ENCODE measurements at regions of chr13 and their contacts with region 1.

Region 1: GRCh38 chr13:52968074-52968700 is 60.4 kb upstream of the OLFM4 start:
- DNase-seq: peak; percentile 71
- H3K4me3 ChIP-seq: no peak overlapping the region; a peak in 1 of 4 replicates
- H3K27ac ChIP-seq: no peak overlapping the region
- H3K4me1 ChIP-seq: no peaks in the 10 kb centered on the region
- H3K27me3 ChIP-seq: no peaks in the 10 kb centered on the region
- CTCF ChIP-seq: peak; percentile 96
- EP300 ChIP-seq: no peak
- RAD21 ChIP-seq: peak; percentile 83

Region 2: DNA sequence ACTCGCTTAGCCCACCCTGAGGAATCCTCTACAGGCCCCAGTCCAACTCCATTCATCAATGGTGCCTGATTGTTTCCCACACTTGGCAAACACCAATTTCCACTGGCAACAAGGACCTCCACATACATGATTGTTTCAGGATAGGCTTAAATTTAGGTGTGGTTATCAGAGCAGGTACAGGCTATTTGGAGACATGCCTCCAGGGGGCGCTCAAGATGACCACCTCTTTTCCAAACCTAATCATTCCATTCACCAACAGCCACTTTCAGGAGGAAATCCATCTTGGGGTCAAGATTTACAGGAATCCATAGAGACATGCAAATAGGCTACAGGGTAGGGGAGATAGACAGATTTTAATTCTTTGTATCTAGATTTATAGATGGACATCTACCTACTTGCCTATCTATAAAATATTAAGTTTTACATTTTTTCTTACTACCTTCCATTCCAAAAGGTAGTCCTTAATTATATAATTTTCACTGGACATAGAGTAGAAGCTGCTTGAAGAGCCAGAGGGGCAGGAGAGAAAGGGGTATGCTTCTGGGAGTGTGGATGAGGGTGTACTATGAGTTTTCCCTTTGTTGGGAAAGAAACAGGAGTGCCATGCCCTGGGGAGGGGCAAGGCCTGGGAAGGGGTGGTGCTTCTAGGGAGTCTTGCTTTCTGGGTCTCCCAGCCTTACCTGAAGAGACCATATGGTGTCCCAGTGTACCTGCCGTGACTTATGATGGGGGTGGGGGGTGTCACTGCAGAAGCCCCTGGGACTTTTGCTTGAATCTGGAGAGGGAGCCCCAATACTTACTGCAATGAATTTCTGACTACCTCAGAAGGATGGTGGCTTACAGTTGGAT is 105.6 kb before region 1 on chr13:
- CTCF ChIA-PET with region 1: interaction called, 44 read pairs
- POLR2A ChIA-PET with region 1: no interaction called
- DNase-seq: peak; percentile 59
- H3K4me3 ChIP-seq: no peak overlapping the region; a peak in 1 of 4 replicates
- H3K27ac ChIP-seq: no peak overlapping the region
- H3K4me1 ChIP-seq: no peaks in the 10 kb centered on the region
- H3K27me3 ChIP-seq: no peaks in the 10 kb centered on the region; the same call in 1 of the 2 replicates
- CTCF ChIP-seq: peak; percentile 79
- EP300 ChIP-seq: no peak
- RAD21 ChIP-seq: peak; percentile 48

Region 3: GRCh38 chr13:52903320-52903719 is 64.9 kb before region 1 on chr13:
- CTCF ChIA-PET with region 1: interaction called, 11 read pairs
- POLR2A ChIA-PET with region 1: no interaction called
- DNase-seq: no peak
- H3K4me3 ChIP-seq: no peak overlapping the region
- H3K27ac ChIP-seq: no peak overlapping the region
- H3K4me1 ChIP-seq: no peaks in the 10 kb centered on the region
- H3K27me3 ChIP-seq: peaks cover 9% of the 10 kb centered on the region; the same call in 1 of the 2 replicates
- CTCF ChIP-seq: no peak
- EP300 ChIP-seq: no peak
- RAD21 ChIP-seq: no peak

Region 4: GRCh38 chr13:52994865-52995264 is 26.7 kb after region 1 on chr13:
- CTCF ChIA-PET with region 1: interaction called, 18 read pairs
- POLR2A ChIA-PET with region 1: no interaction called
- DNase-seq: no peak
- H3K4me3 ChIP-seq: no peak overlapping the region
- H3K27ac ChIP-seq: no peak overlapping the region
- H3K4me1 ChIP-seq: peaks cover 0 to 12% of the 10 kb centered on the region in 2 experiments; a peak in 2 of 4 replicates
- H3K27me3 ChIP-seq: no peaks in the 10 kb centered on the region
- CTCF ChIP-seq: no peak
- EP300 ChIP-seq: no peak
- RAD21 ChIP-seq: no peak

Region 5: DNA sequence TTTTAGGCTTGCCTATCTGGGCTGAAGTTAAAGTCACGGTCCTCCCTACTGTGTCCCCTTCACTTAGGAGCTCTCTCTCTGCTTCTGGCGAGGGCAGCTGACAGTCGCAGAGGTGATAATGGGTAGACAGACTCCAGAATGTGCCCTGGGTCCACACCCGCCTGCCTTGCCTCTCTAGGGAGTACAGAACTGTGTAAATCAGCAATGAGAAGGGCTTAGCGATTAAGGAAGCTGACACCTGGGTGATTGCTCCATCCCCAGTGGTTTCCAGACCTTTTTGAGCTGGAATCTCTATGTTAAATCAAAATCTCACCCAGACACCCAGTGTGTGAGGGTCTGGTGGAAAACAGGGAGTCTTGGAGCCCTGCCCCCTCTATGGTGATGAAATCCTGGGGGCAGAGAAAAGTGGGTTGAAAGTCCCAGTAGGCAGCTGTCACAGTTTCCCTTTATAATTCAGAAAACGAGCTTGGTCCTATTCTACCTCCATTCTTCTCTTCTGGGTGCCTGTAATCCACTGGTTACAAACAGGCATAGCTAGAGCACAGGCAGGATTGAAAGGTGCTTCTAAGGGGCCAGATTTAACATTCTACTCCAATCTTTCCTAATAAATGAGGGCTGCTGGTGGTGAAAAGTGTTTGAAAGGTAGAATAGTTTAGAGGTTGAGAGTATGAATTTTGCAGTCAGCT is 107.3 kb after region 1 on chr13:
- CTCF ChIA-PET with region 1: interaction called, 21 read pairs
- POLR2A ChIA-PET with region 1: no interaction called
- DNase-seq: no peak
- H3K4me3 ChIP-seq: no peak overlapping the region
- H3K27ac ChIP-seq: no peak overlapping the region; a peak in 1 of 4 replicates
- H3K4me1 ChIP-seq: peaks cover 0 to 20% of the 10 kb centered on the region in 2 experiments; a peak in 2 of 4 replicates
- H3K27me3 ChIP-seq: no peaks in the 10 kb centered on the region
- CTCF ChIP-seq: no peak
- EP300 ChIP-seq: no peak
- RAD21 ChIP-seq: no peak

Region 6: DNA sequence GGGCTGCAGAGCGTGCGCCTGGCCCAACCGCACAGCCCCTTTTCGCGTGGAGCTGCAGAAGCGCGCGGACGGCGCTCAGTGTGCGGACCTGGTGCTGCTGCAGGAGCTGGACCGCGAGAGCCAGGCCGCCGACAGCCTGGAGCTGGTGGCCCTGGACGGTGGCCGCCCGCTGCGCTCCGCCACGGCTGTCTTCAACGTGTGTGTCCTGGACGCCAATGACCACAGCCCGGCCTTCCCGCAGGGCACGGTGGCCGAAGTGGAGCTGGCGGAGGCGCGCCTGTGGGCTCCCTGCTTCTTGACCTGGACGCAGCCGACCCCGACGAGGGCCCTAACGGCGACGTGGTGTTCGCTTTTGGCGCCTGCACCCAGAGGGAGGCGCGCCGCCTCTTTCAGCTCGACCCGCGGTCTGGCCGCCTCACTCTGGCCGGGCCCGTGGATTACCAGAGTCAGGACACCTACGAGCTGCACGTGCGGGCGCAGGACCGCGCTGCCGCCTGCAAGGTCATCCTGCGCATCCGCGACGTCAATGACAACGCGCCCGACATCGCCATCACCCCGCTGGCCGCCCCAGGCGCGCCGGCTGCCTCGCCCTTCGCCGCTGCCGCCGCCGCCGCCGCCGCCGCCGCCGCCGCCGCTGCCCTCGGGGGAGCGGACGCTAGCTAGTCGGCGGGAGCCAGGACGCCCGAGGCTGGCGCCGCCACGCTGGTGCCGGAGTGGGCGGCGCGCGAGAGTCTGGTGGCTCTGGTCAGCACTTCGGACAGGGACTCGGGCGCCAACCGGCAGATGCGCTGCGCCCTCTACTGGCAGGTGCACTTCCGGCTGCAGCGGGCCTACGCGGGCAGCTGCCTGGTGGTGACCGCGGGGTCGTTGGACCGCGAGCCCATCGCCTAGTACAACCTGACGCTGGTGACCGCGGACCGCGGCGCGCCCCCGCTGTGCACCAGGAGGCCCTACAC is 232.6 kb after region 1 on chr13:
- CTCF ChIA-PET with region 1: interaction called, 14 read pairs
- POLR2A ChIA-PET with region 1: no interaction called
- DNase-seq: peak; percentile 44
- H3K4me3 ChIP-seq: no peak overlapping the region; a peak in 1 of 4 replicates
- H3K27ac ChIP-seq: no peak overlapping the region
- H3K4me1 ChIP-seq: no peaks in the 10 kb centered on the region; a peak in 2 of 4 replicates
- H3K27me3 ChIP-seq: no peaks in the 10 kb centered on the region
- CTCF ChIP-seq: no peak; the same call in 1 of the 2 replicates
- EP300 ChIP-seq: no peak
- RAD21 ChIP-seq: no peak

Measured in SK-N-SH (cell line).